Heart left ventricle (tissue), 16 donors: ENCODE measurements at regions of chrX and their contacts with region 1.

Region 1: GRCh38 chrX:30713061-30713525 is 59.9 kb downstream of the GK start:
- DNase-seq: peak in 4 of 5 donors; percentile 12 to 40 (median 28)
- ATAC-seq: peak in 2 of 4 donors; percentile 55
- H3K4me3 ChIP-seq: no peak overlapping the region
- H3K27ac ChIP-seq: no peak overlapping the region
- H3K4me1 ChIP-seq: no peaks in the 10 kb centered on the region
- H3K27me3 ChIP-seq: peaks cover 0 to 5% (median 0%) of the 10 kb centered on the region in 9 donors
- CTCF ChIP-seq: peak; percentile 12 to 63 (median 50)
- POLR2A ChIP-seq: no peak

Region 2: GRCh38 chrX:30570505-30570904 is 142.6 kb before region 1 on chrX:
- intact Hi-C with region 1: loop called in 9 of 10 experiments (anchors 1 to 10 kb)
- DNase-seq: no peak
- ATAC-seq: no peak
- H3K4me3 ChIP-seq: no peak overlapping the region
- H3K27ac ChIP-seq: no peak overlapping the region
- H3K4me1 ChIP-seq: peaks cover 0 to 4% (median 0%) of the 10 kb centered on the region in 12 donors
- H3K27me3 ChIP-seq: peaks cover 0 to 11% (median 0%) of the 10 kb centered on the region in 9 donors
- CTCF ChIP-seq: peak; percentile 31 to 72 (median 53)
- POLR2A ChIP-seq: no peak

Region 3: GRCh38 chrX:30577362-30577991 is 135.6 kb before region 1 on chrX and contains the start of gene TASL:
- intact Hi-C with region 1: loop called in 7 of 10 experiments (anchors 5 to 10 kb)
- DNase-seq: no peak
- ATAC-seq: no peak
- H3K4me3 ChIP-seq: peak within 1 kb of the TSS in 6 of 12 donors; percentile 4 to 48 (median 24)
- H3K27ac ChIP-seq: peak within 1 kb of the TSS in 3 of 12 donors; percentile 9 to 82 (median 34)
- H3K4me1 ChIP-seq: peaks cover 0 to 4% (median 0%) of the 10 kb centered on the region in 12 donors
- H3K27me3 ChIP-seq: no peaks in the 10 kb centered on the region
- CTCF ChIP-seq: no peak
- POLR2A ChIP-seq: no peak
- total RNA-seq, gene TASL: 0.21 to 5.2 (median 0.40) TPM in 7 of 9 donors, not detected in the others

Region 4: DNA sequence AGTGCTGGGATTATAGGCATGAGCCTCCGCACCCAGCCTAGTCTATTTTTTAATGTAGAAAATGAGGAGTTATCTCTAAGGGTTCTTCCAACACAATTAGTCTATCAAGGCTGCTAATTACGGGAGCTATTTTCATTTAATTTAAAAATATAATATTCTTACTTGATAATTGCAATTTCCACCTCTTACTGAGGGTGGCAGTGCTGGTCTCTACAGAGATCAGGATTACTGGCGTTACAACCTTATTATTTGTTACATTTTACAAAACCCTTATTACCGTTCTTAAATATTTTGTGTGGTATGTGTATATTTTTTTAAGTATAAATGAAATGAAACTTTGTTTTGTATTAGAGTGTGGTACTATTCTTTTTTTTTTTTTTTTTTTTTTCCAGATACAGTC is 77.5 kb before region 1 on chrX:
- intact Hi-C with region 1: loop called in 1 of 10 experiments (anchors 10 kb)
- DNase-seq: no peak
- ATAC-seq: no peak
- H3K4me3 ChIP-seq: no peak overlapping the region
- H3K27ac ChIP-seq: no peak overlapping the region
- H3K4me1 ChIP-seq: peaks cover 0 to 9% (median 0%) of the 10 kb centered on the region in 12 donors
- H3K27me3 ChIP-seq: no peaks in the 10 kb centered on the region
- CTCF ChIP-seq: peak in 9 of 12 donors; percentile 8 to 42 (median 28)
- POLR2A ChIP-seq: no peak